Endothelial cell of umbilical vein (primary cell): ENCODE measurements at regions of chr12 and their contacts with region 1.

Region 1: GRCh38 chr12:92928962-92929915 is at the start of gene EEA1:
- DNase-seq: peak; percentile 96
- H3K4me3 ChIP-seq: peak within 1 kb of the TSS; percentile 91 to 97 (median 95)
- H3K27ac ChIP-seq: peak within 1 kb of the TSS; percentile 90
- H3K4me1 ChIP-seq: peaks cover 17% of the 10 kb centered on the region
- H3K27me3 ChIP-seq: no peaks in the 10 kb centered on the region
- CTCF ChIP-seq: peak in 1 of 2 donors; percentile 34
- POLR2A ChIP-seq: peak; percentile 83
- total RNA-seq, gene EEA1: 37.9 and 38.8 TPM in 2 replicates

Region 2: DNA sequence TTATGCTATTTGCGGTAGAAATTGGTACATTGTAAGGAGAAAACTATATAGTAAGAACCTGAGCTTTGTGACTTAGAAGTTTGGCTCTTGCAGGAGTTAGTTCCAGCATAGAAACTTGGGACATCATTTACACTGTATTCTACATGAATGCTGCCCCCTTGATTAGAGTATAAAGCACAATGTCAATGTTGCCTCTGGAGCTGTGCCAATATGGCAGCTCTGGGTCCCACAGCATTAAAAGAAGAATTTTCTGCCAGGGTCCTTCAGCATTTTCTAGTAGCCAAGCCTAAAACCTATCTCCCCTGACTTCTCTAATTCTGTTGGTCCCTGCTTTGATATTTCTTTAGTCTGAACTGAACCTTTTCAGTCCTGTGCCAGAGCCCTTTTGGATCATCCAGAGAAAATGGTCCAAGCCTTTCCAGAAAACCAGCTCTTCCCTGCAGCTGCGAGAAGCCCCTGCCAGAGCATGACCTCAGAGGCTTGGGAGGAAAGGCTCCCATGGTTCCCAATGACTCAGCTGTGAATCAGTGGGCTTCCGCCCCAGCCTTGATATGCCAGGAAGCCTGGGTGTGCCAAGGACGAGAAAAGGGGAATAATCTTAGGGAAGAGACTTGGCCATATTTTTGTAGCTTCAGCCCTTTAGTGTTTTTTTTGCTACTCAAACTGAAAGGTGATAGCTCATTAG is 183.2 kb before region 1 on chr12:
- CTCF ChIA-PET with region 1: no interaction called
- POLR2A ChIA-PET with region 1: no interaction called
- dilution Hi-C with region 1: no loop called
- intact Hi-C with region 1: loop called (anchors 10 kb)
- DNase-seq: peak; percentile 99
- H3K4me3 ChIP-seq: no peak overlapping the region
- H3K27ac ChIP-seq: peak overlapping the region; percentile 93
- H3K4me1 ChIP-seq: peaks cover 25% of the 10 kb centered on the region
- H3K27me3 ChIP-seq: no peaks in the 10 kb centered on the region
- CTCF ChIP-seq: no peak
- POLR2A ChIP-seq: peak; percentile 48

Region 3: DNA sequence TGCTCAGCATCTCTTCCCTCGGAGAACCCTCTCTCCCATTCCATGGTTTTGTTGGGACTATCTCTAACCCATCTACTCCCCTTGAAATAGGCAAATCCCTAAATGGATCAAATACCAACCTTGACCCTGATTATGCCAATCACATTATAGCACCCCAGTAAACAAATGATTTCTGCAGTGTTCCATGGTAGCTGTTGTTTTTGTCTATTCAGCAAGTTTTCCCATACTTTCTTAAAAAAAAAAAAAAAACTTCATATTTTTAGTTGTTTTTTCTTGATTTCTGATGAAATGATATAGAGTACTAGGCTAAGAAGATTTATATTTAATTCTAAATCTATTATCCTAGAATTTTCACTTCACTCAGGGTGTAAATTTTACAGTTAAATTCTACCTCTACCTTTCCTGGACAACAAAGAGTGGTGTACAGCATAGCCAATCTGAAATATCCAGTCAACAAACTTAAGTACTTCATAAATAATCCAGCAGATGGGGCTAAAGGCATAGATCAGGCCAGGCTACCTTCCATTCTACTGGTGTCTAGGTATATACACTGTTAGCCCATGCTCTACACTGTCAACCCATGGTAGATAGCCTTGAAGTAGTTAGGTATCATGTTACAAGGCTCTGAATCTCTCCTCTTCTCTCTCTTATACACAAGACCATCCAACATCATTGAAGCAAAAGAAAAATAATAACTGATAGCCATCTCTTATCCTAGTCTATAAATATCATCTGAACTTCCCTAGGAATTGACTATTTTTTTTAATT is 144.3 kb before region 1 on chr12:
- CTCF ChIA-PET with region 1: interaction called, 13 read pairs
- POLR2A ChIA-PET with region 1: no interaction called
- dilution Hi-C with region 1: no loop called
- intact Hi-C with region 1: loop called (anchors 1 kb)
- DNase-seq: peak; percentile 90
- H3K4me3 ChIP-seq: no peak overlapping the region
- H3K27ac ChIP-seq: no peak overlapping the region
- H3K4me1 ChIP-seq: no peaks in the 10 kb centered on the region
- H3K27me3 ChIP-seq: no peaks in the 10 kb centered on the region
- CTCF ChIP-seq: peak; percentile 26 to 28
- POLR2A ChIP-seq: no peak

Region 4: DNA sequence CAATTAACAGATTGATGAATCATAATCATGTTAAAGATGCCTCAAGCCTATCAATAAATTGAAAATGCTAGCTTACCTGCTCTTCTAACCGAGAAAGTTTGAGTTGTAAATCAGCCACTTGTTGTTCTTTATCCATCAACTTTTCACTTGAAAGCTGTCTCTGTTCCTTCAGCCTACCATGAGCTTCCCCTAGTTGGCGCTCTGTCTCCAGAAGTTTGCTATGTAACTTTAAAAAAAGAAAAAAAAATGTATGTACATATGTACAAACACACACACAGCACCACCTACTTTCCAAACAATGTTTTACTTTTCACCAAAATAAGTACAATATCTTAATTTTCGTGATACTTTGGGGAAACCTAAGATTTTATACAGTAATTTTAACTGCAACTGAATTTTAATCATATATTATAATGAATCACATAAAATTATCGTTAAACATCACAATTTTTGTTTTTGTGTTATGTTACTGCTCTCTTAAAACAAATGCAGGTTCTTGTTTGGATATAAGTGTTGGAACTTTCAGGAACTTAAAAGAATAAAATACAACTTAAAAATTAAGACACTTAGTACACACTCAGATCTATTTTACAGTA is 101.3 kb before region 1 on chr12:
- CTCF ChIA-PET with region 1: interaction called, 19 read pairs
- POLR2A ChIA-PET with region 1: no interaction called
- dilution Hi-C with region 1: no loop called
- intact Hi-C with region 1: loop called (anchors 5 kb)
- DNase-seq: peak; percentile 69
- H3K4me3 ChIP-seq: no peak overlapping the region
- H3K27ac ChIP-seq: no peak overlapping the region
- H3K4me1 ChIP-seq: no peaks in the 10 kb centered on the region
- H3K27me3 ChIP-seq: no peaks in the 10 kb centered on the region
- CTCF ChIP-seq: peak; percentile 61 to 67
- POLR2A ChIP-seq: no peak

Region 5: DNA sequence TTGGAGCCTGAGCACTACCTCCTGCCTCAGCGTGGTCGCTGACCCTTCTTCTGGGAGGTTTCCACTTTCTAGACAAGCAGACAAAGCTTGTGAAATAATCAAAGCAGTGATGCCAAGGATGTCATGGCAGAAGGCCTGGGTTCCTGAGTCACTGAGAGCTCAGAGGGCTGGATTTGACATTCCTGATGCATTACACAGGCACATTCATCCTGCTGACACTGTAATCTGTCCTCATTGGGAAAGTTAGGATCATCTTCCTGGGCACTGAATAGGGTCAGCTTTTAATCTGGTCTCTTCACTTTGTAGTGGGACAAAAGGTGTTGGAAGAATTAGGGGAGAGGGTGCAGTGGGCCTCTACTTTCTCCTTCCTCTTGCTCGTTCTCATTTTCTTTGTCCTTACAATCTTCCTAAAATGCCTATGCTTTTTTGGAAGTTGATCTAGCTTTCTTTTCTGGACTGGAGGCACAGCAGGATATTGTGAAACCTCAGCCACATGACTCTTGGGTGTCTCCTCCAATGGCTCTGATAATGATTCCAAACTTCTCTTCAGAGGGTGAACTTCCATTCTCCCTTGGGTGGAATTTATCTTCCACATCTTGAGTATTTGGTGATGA is 29.7 kb before region 1 on chr12:
- CTCF ChIA-PET with region 1: interaction called, 10 read pairs
- POLR2A ChIA-PET with region 1: no interaction called
- dilution Hi-C with region 1: no loop called
- intact Hi-C with region 1: loop called (anchors 1 kb)
- DNase-seq: peak; percentile 87
- H3K4me3 ChIP-seq: no peak overlapping the region
- H3K27ac ChIP-seq: peak overlapping the region; percentile 76
- H3K4me1 ChIP-seq: peaks cover 22% of the 10 kb centered on the region
- H3K27me3 ChIP-seq: no peaks in the 10 kb centered on the region
- CTCF ChIP-seq: no peak
- POLR2A ChIP-seq: no peak

Region 6: DNA sequence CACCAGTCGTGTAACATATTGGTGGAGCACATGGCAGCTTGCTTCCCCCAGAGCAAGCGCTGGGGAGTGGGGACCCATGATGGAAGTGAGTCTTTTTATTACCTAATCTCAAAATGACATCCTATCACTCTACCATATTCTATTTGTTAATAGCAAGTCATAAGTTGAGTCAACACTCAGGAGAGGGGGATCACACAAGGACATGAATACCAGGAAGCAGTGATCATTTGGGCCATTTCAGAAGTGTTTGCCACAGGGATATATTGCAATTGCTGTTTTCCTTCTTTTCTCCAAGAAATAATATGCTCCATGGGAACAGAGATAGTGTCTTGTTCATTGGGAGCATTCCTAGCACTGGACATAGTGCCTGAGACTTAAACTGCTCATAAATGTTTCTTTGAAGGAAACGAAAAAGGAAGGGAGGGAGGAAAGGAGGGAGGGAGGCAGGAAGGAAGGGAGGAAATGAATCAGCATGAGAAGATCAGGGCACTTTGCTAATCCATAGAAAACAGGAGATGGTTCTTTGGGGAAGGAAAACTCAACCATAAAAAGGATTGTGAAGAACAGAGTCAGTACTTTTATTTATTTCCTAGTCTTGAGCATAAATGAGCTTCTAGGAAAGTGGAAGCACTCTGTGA is 39.1 kb after region 1 on chr12:
- CTCF ChIA-PET with region 1: no interaction called
- POLR2A ChIA-PET with region 1: no interaction called
- dilution Hi-C with region 1: no loop called
- intact Hi-C with region 1: loop called (anchors 1 kb)
- DNase-seq: peak; percentile 67
- H3K4me3 ChIP-seq: no peak overlapping the region
- H3K27ac ChIP-seq: peak overlapping the region; percentile 46
- H3K4me1 ChIP-seq: peaks cover 27% of the 10 kb centered on the region
- H3K27me3 ChIP-seq: no peaks in the 10 kb centered on the region
- CTCF ChIP-seq: no peak
- POLR2A ChIP-seq: no peak

Region 7: GRCh38 chr12:93089805-93090569 is 160.7 kb after region 1 on chr12:
- CTCF ChIA-PET with region 1: no interaction called
- POLR2A ChIA-PET with region 1: no interaction called
- dilution Hi-C with region 1: no loop called
- intact Hi-C with region 1: loop called (anchors 10 kb)
- DNase-seq: peak; percentile 92
- H3K4me3 ChIP-seq: no peak overlapping the region
- H3K27ac ChIP-seq: peak overlapping the region; percentile 83
- H3K4me1 ChIP-seq: peaks cover 41% of the 10 kb centered on the region
- H3K27me3 ChIP-seq: no peaks in the 10 kb centered on the region
- CTCF ChIP-seq: no peak
- POLR2A ChIP-seq: no peak